Activated B cell treated with CpG ODN at 0.5 μM for 24 hours (primary cell): ENCODE measurements at regions of chr1 and their contacts with region 1.

Region 1: GRCh38 chr1:67430352-67431155 is at the start of gene SERBP1:
- DNase-seq: peak; percentile 91
- ATAC-seq: peak; percentile 86
- H3K4me3 Mint-ChIP-seq: peak within 1 kb of the TSS; percentile 98
- H3K27ac Mint-ChIP-seq: peak within 1 kb of the TSS; percentile 99
- H3K4me1 Mint-ChIP-seq: peaks cover 59% of the 10 kb centered on the region
- H3K27me3 Mint-ChIP-seq: no peaks in the 10 kb centered on the region
- CTCF ChIP-seq: no peak
- total RNA-seq, gene SERBP1: 222 and 232 TPM in 2 replicates

Region 2: GRCh38 chr1:66929999-66930822 is 500.3 kb before region 1 on chr1:
- CTCF ChIA-PET with region 1: no interaction called
- POLR2A ChIA-PET with region 1: interaction called, 16 read pairs
- intact Hi-C with region 1: loop called (anchors 1 kb)
- DNase-seq: peak; percentile 98
- ATAC-seq: peak; percentile 78
- H3K4me3 Mint-ChIP-seq: peak overlapping the region; percentile 94
- H3K27ac Mint-ChIP-seq: peak overlapping the region; percentile 93
- H3K4me1 Mint-ChIP-seq: peaks cover 57% of the 10 kb centered on the region
- H3K27me3 Mint-ChIP-seq: no peaks in the 10 kb centered on the region
- CTCF ChIP-seq: no peak

Region 3: GRCh38 chr1:67110352-67110751 is 320.2 kb before region 1 on chr1:
- CTCF ChIA-PET with region 1: no interaction called
- POLR2A ChIA-PET with region 1: no interaction called
- intact Hi-C with region 1: loop called (anchors 5 kb)
- DNase-seq: no peak
- ATAC-seq: peak; percentile 60
- H3K4me3 Mint-ChIP-seq: peak overlapping the region; percentile 58
- H3K27ac Mint-ChIP-seq: peak overlapping the region; percentile 76
- H3K4me1 Mint-ChIP-seq: peaks cover 41% of the 10 kb centered on the region
- H3K27me3 Mint-ChIP-seq: no peaks in the 10 kb centered on the region
- CTCF ChIP-seq: no peak

Region 4: DNA sequence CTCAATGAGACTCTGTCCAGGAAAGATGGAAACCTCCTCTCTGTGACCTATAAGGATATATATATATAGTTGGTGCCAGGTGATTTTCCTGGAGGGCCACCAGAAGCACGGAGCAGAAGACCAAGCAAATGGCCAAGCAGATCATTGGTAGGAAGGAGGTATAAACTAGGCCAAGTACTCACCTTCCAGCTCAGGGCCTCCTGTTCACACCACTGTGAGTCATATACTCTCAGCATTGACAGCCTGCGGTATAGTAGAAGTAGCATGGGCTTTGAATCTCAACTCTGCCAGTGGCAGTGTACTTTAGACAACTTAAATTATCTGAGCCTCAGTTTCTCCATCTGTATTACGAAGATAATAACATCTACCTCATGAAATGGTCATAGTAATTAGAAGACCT is 107.5 kb before region 1 on chr1:
- CTCF ChIA-PET with region 1: no interaction called
- POLR2A ChIA-PET with region 1: no interaction called
- intact Hi-C with region 1: no loop called
- DNase-seq: no peak
- ATAC-seq: no peak
- H3K4me3 Mint-ChIP-seq: no peak overlapping the region
- H3K27ac Mint-ChIP-seq: no peak overlapping the region
- H3K4me1 Mint-ChIP-seq: no peaks in the 10 kb centered on the region
- H3K27me3 Mint-ChIP-seq: no peaks in the 10 kb centered on the region
- CTCF ChIP-seq: no peak

Region 5: DNA sequence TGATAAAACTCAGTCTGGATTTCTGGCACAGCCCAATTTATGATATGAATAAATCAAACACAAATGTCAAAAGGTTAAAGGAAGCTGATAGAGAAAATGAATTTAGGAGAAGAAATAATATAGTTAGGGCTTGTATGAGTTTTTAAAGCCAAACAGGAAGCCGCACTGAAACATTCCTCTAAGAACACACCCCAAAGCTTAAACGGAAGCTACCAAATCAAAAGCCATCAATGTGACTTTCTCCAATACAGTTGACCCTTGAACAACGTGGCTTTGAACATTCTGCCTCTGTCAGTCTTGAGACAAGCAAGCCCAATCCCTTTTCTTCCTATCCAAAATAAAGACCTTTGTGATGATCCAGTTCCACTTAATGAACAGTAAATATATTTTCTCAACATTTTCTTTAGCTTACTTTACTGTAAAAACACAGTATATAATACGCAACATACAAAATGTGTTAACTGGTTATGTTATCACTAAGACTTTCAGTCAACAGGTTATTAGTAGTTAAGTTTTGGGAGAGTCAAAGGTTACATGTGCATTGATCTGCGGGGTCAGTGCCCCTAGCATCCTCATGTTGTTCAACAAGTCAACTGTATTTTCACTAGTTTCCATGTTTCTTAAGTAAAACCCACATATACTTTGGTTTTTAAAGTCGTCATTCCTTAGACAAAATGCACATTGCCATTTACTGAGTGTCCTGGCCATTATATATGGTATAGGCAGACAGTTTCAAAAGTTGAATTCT is 11.5 kb before region 1 on chr1:
- CTCF ChIA-PET with region 1: no interaction called
- POLR2A ChIA-PET with region 1: interaction called, 13 read pairs
- intact Hi-C with region 1: loop called (anchors 2 kb)
- DNase-seq: no peak
- ATAC-seq: no peak
- H3K4me3 Mint-ChIP-seq: no peak overlapping the region
- H3K27ac Mint-ChIP-seq: no peak overlapping the region
- H3K4me1 Mint-ChIP-seq: peaks cover 5% of the 10 kb centered on the region
- H3K27me3 Mint-ChIP-seq: no peaks in the 10 kb centered on the region
- CTCF ChIP-seq: no peak

Region 6: GRCh38 chr1:67524143-67525052 is 93.8 kb after region 1 on chr1:
- CTCF ChIA-PET with region 1: no interaction called
- POLR2A ChIA-PET with region 1: no interaction called
- intact Hi-C with region 1: no loop called
- DNase-seq: no peak
- ATAC-seq: no peak
- H3K4me3 Mint-ChIP-seq: no peak overlapping the region
- H3K27ac Mint-ChIP-seq: no peak overlapping the region
- H3K4me1 Mint-ChIP-seq: no peaks in the 10 kb centered on the region
- H3K27me3 Mint-ChIP-seq: peaks cover 5% of the 10 kb centered on the region
- CTCF ChIP-seq: no peak

Region 7: GRCh38 chr1:67685067-67685557 is 254.6 kb after region 1 on chr1 and contains the start of gene GADD45A:
- CTCF ChIA-PET with region 1: no interaction called
- POLR2A ChIA-PET with region 1: interaction called, 20 read pairs
- intact Hi-C with region 1: loop called (anchors 1 kb)
- DNase-seq: peak; percentile 81
- ATAC-seq: peak; percentile 87
- H3K4me3 Mint-ChIP-seq: peak within 1 kb of the TSS; percentile 95
- H3K27ac Mint-ChIP-seq: peak within 1 kb of the TSS; percentile 81
- H3K4me1 Mint-ChIP-seq: peaks cover 38% of the 10 kb centered on the region
- H3K27me3 Mint-ChIP-seq: no peaks in the 10 kb centered on the region
- CTCF ChIP-seq: no peak
- total RNA-seq, gene GADD45A: 8.3 and 8.7 TPM in 2 replicates